ENCODE measurements at regions of chr20 and their contacts with region 1.

Region 1: GRCh38 chr20:34363062-34363464 is at the start of gene ITCH:
- DNase-seq: peak; percentile 96 to 98
- ATAC-seq: peak; percentile 99 to 100
- H3K4me3 ChIP-seq: peak within 1 kb of the TSS; percentile 81
- H3K27ac ChIP-seq: peak within 1 kb of the TSS; percentile 97 to 98
- H3K4me1 ChIP-seq: peaks cover 40% of the 10 kb centered on the region
- CTCF ChIP-seq: no peak
- EP300 ChIP-seq: no peak
- POLR2A ChIP-seq: peak; percentile 80
- RAD21 ChIP-seq: no peak
- polyA plus RNA-seq, gene ITCH: 23.9 and 27.5 TPM in 2 replicates

Region 2: DNA sequence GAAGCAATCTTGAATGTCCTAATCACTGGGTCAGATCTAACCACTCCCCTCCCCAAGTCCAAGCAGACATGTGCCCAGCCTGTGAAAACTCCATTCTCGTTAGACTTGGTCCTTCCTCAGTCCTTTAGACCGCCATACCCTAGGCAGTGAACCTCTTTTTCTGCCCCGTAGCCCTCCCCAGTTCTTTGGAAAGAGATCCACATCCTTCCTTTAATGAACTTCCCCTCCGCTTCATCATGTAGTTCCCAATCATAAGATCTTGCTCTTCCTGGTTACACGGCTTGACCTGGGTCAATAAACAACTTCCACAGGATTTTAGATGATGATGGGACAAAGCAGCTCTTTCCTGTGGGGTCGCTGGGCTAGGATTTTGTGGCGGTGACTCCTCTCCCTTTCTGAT is 69.5 kb before region 1 on chr20:
- CTCF ChIA-PET with region 1: no interaction called
- POLR2A ChIA-PET with region 1: no interaction called
- DNase-seq: no peak
- ATAC-seq: no peak
- H3K4me3 ChIP-seq: no peak overlapping the region
- H3K27ac ChIP-seq: no peak overlapping the region
- H3K4me1 ChIP-seq: peaks cover 7% of the 10 kb centered on the region; the same call in 1 of the 3 replicates
- CTCF ChIP-seq: no peak
- EP300 ChIP-seq: no peak
- POLR2A ChIP-seq: no peak
- RAD21 ChIP-seq: no peak

Region 3: GRCh38 chr20:34377072-34377847 is 14.2 kb after region 1 on chr20:
- CTCF ChIA-PET with region 1: interaction called, 5 read pairs
- POLR2A ChIA-PET with region 1: interaction called, 21 read pairs
- DNase-seq: no peak
- ATAC-seq: no peak
- H3K4me3 ChIP-seq: no peak overlapping the region
- H3K27ac ChIP-seq: no peak overlapping the region
- H3K4me1 ChIP-seq: peaks cover 21% of the 10 kb centered on the region
- CTCF ChIP-seq: no peak
- EP300 ChIP-seq: no peak
- POLR2A ChIP-seq: no peak
- RAD21 ChIP-seq: no peak

Region 4: GRCh38 chr20:34390769-34391452 is 27.8 kb after region 1 on chr20:
- CTCF ChIA-PET with region 1: no interaction called
- POLR2A ChIA-PET with region 1: interaction called, 10 read pairs
- DNase-seq: peak; percentile 36 to 96
- ATAC-seq: peak; percentile 91
- H3K4me3 ChIP-seq: peak overlapping the region; percentile 0; the same call in 1 of the 3 replicates
- H3K27ac ChIP-seq: peak overlapping the region; percentile 60 to 86
- H3K4me1 ChIP-seq: peaks cover 71% of the 10 kb centered on the region
- CTCF ChIP-seq: no peak
- EP300 ChIP-seq: peak; percentile 71 to 87; a peak in 2 of 5 replicates
- POLR2A ChIP-seq: no peak
- RAD21 ChIP-seq: peak in 1 of 2 experiments; percentile 32; a peak in 2 of 5 replicates

Region 5: GRCh38 chr20:34516247-34517113 is 153.4 kb after region 1 on chr20 and contains the start of gene DYNLRB1:
- CTCF ChIA-PET with region 1: no interaction called
- POLR2A ChIA-PET with region 1: interaction called, 10 read pairs
- DNase-seq: peak; percentile 93 to 96
- ATAC-seq: peak; percentile 93 to 96
- H3K4me3 ChIP-seq: peak within 1 kb of the TSS; percentile 80
- H3K27ac ChIP-seq: peak within 1 kb of the TSS; percentile 95 to 96
- H3K4me1 ChIP-seq: peaks cover 24% of the 10 kb centered on the region
- CTCF ChIP-seq: no peak
- EP300 ChIP-seq: no peak
- POLR2A ChIP-seq: peak; percentile 74
- RAD21 ChIP-seq: no peak
- polyA plus RNA-seq, gene DYNLRB1: 148 and 204 TPM in 2 replicates